A673 (cell line): ENCODE measurements at regions of chr1 and their contacts with region 1.

Region 1: GRCh38 chr1:169906938-169907337 is 13.2 kb upstream of the SCYL3 start:
- DNase-seq: no peak
- H3K4me3 ChIP-seq: no peak overlapping the region
- H3K27ac ChIP-seq: no peak overlapping the region
- H3K4me1 ChIP-seq: no peaks in the 10 kb centered on the region
- H3K27me3 ChIP-seq: peaks cover 11% of the 10 kb centered on the region
- CTCF ChIP-seq: no peak

Region 2: DNA sequence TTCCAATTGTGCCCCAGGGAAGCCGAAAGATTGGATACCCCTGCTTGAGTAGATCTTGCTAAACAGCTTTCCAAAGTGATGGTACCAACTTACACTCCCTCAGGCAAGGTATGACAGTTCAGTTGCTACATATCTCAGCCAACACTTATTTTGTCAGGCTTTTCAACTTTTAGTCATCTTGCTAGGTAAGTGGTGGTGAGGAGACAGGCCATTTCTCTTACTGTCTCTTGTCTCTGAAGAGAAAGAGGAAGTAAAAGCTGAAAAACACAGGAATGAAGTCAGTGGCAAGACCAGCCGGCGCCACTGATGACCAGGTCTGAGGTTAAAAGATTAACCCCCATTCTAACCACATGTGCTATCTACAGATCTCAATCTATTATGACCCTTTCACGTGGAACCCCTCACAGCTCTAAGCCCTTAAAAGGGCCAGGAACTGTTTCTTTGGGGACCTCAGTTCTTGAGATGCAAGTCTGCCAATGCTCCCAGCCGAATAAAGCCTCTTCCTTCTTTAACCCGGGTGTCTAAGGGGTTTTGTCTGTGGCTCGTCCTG is 1997.2 kb before region 1 on chr1:
- CTCF ChIA-PET with region 1: no interaction called
- POLR2A ChIA-PET with region 1: no interaction called
- intact Hi-C with region 1: no loop called
- DNase-seq: no peak
- H3K4me3 ChIP-seq: no peak overlapping the region
- H3K27ac ChIP-seq: no peak overlapping the region
- H3K4me1 ChIP-seq: no peaks in the 10 kb centered on the region
- H3K27me3 ChIP-seq: no peaks in the 10 kb centered on the region
- CTCF ChIP-seq: no peak

Region 3: DNA sequence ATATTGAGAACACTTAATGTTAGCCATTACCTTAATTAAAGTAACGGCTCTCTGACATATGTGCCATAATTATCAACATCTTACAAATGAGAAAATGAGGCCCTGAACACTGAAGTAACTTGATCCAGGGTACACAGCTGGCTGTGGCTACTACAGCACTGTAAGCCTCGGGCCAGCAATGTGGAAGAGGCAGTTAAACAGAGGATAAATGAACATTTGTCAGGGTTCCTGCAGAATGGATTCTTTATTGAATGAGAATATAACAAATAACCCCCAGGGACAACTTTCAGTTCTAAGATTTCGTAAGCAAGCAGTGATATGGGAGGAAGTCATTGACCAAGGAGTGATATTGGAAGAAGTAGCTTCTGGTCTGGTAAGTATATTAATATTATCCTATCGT is 57.3 kb after region 1 on chr1:
- CTCF ChIA-PET with region 1: no interaction called
- POLR2A ChIA-PET with region 1: no interaction called
- intact Hi-C with region 1: loop called (anchors 10 kb)
- DNase-seq: no peak
- H3K4me3 ChIP-seq: no peak overlapping the region
- H3K27ac ChIP-seq: no peak overlapping the region
- H3K4me1 ChIP-seq: no peaks in the 10 kb centered on the region
- H3K27me3 ChIP-seq: no peaks in the 10 kb centered on the region
- CTCF ChIP-seq: no peak